ENCODE measurements at regions of chr1 and their contacts with region 1.

Region 1: GRCh38 chr1:37449936-37450335 is 24.4 kb upstream of the ZC3H12A start:
- DNase-seq: no peak
- H3K4me3 ChIP-seq: no peak overlapping the region
- H3K27ac ChIP-seq: no peak overlapping the region
- H3K4me1 ChIP-seq: peaks cover under 1% of the 10 kb centered on the region
- H3K27me3 ChIP-seq: no peaks in the 10 kb centered on the region
- CTCF ChIP-seq: no peak
- EP300 ChIP-seq: no peak
- POLR2A ChIP-seq: no peak

Region 2: GRCh38 chr1:37486680-37487618 is 37.0 kb after region 1 on chr1:
- intact Hi-C with region 1: loop called in 3 of 4 experiments (anchors 2 kb)
- DNase-seq: peak; percentile 63 to 87 (median 81)
- H3K4me3 ChIP-seq: no peak overlapping the region
- H3K27ac ChIP-seq: peak overlapping the region in 1 of 2 donors; percentile 57
- H3K4me1 ChIP-seq: no peaks in the 10 kb centered on the region
- H3K27me3 ChIP-seq: no peaks in the 10 kb centered on the region
- CTCF ChIP-seq: peak; percentile 91 to 95 (median 92)
- EP300 ChIP-seq: no peak
- POLR2A ChIP-seq: no peak

Region 3: DNA sequence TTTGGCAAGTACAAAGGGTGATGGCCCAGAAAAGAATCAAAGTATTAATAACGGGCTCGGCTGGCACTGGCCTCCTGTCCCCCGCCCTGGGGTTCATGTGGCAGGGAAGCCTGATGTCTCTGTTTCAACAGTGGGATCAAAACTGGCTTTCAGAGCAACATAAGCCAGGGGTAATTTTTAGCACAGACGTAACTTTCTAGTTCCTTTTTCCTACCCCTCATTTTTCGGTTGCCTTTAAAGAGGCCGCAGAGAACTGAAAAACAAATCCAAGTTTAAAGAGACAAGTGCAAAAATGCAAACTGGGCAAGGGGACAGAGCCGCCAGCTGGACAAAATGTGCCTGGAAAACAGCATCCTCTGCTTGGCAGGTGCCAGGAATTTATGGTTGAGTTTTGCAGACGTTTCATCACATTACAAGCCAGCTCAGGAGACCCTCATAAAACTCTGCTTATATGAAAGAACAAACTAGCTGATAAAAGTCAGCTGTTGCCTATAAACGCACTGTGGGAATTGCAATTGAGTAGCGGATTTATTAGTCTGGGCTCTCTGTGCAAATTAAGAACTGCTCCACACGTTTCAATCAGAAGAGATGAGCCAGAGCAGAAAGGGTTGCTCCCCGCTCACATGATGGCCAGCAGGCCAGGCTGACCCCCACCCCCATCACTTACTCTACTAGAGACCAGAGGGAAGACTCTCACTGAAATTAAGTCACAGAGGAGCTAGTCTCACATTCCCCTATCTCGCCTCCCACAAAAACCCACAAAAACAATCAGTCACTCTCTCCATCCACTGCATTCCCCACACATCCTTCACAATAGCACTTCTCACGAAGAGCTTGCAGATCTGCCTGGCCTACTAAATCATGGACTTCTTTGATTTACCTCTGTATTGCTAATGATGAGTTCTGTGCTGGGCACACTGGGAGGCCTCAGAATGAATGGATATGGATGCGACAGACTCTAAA is 226.6 kb after region 1 on chr1:
- intact Hi-C with region 1: loop called (anchors 5 to 10 kb)
- DNase-seq: peak; percentile 30 to 60 (median 31)
- H3K4me3 ChIP-seq: no peak overlapping the region
- H3K27ac ChIP-seq: peak overlapping the region; percentile 4 to 43
- H3K4me1 ChIP-seq: peaks cover 4% of the 10 kb centered on the region
- H3K27me3 ChIP-seq: no peaks in the 10 kb centered on the region
- CTCF ChIP-seq: no peak
- EP300 ChIP-seq: no peak
- POLR2A ChIP-seq: no peak

Region 4: GRCh38 chr1:37682334-37682987 is 232.5 kb after region 1 on chr1:
- intact Hi-C with region 1: loop called (anchors 5 to 10 kb)
- DNase-seq: peak; percentile 55 to 79 (median 74)
- H3K4me3 ChIP-seq: no peak overlapping the region
- H3K27ac ChIP-seq: no peak overlapping the region
- H3K4me1 ChIP-seq: no peaks in the 10 kb centered on the region
- H3K27me3 ChIP-seq: no peaks in the 10 kb centered on the region
- CTCF ChIP-seq: peak; percentile 59 to 82 (median 77)
- EP300 ChIP-seq: no peak
- POLR2A ChIP-seq: no peak